Mammary epithelial cell (primary cell): ENCODE measurements at regions of chr17 and their contacts with region 1.

Region 1: GRCh38 chr17:39769974-39770587 is 32.3 kb downstream of the GRB7 start:
- DNase-seq: peak; percentile 100
- H3K4me3 ChIP-seq: no peak overlapping the region
- H3K27ac ChIP-seq: no peak overlapping the region
- H3K4me1 ChIP-seq: peaks cover 17% of the 10 kb centered on the region
- H3K27me3 ChIP-seq: peaks cover 60% of the 10 kb centered on the region
- CTCF ChIP-seq: no peak

Region 2: DNA sequence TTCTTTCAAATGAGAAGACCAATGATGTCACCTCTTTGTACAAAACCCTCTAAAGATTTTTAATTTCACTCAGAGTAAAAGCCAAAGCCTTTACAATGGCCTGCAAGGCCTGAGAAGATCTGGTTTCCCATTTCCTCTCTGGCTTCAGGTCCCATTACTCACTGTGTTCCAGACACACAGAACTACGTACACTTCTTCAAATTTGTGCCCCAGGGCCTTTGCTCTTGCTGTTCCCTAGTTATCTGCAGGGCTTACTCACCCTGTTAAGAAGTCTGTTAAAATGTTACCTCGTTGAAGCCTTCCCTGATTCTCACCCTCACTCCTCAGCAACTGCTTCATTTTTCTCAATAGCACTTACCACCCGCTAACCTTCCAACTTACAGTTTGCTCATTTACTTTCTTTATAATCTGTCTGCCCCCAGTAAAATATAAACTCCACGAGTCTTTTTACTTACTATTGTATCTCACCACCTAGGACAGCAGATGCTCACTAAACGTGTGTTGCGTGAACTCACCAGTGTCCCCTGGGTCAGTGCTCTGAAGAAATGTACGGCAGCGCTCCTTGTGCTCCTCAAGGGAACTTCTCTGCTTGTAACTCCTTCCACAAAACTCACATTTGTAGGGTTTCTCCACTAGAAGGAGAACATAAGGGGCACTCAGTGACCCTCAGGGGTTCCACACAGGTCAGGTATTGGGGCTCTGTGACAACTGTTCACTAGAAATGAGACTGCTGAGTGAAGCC is 17.8 kb after region 1 on chr17:
- CTCF ChIA-PET with region 1: no interaction called
- dilution Hi-C with region 1: no loop called
- in situ Hi-C with region 1: no loop called
- intact Hi-C with region 1: no loop called
- DNase-seq: peak; percentile 64
- H3K4me3 ChIP-seq: no peak overlapping the region
- H3K27ac ChIP-seq: no peak overlapping the region
- H3K4me1 ChIP-seq: peaks cover 11% of the 10 kb centered on the region
- H3K27me3 ChIP-seq: peaks cover 9% of the 10 kb centered on the region
- CTCF ChIP-seq: no peak

Region 3: DNA sequence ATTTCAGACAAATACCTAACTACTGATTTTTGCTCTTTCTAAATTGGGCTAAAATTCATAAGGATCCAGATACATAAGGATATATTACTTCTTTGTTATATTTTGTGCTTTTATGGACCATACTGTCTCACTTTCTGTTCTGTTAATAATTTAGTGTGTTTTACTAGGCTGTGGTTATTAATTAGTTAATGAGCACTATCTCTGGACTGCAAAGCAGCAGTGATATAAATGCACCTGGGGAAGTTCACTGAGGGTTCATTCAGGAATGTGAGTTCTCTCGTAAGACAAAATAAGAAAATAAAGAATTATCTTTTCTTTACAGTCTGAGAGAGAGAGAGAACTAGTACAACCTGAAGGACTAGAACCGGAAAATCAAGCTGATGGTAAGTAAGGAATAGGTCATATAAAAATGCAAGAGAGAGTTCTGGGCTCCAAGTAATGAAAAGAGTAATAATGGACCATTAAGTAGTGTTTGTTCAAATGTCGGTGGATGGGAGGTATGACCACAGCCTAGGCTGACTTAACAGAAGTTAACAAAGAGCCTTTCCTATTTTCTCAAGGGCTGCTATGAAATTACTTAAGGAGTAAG is 38.4 kb after region 1 on chr17:
- CTCF ChIA-PET with region 1: no interaction called
- dilution Hi-C with region 1: no loop called
- in situ Hi-C with region 1: no loop called
- intact Hi-C with region 1: no loop called
- DNase-seq: no peak
- H3K4me3 ChIP-seq: no peak overlapping the region
- H3K27ac ChIP-seq: no peak overlapping the region
- H3K4me1 ChIP-seq: no peaks in the 10 kb centered on the region
- H3K27me3 ChIP-seq: peaks cover 3% of the 10 kb centered on the region
- CTCF ChIP-seq: no peak

Region 4: GRCh38 chr17:39828443-39828842 is 58.4 kb after region 1 on chr17:
- CTCF ChIA-PET with region 1: no interaction called
- dilution Hi-C with region 1: no loop called
- in situ Hi-C with region 1: no loop called
- intact Hi-C with region 1: loop called (anchors 5 kb)
- DNase-seq: no peak
- H3K4me3 ChIP-seq: no peak overlapping the region
- H3K27ac ChIP-seq: no peak overlapping the region
- H3K4me1 ChIP-seq: no peaks in the 10 kb centered on the region
- H3K27me3 ChIP-seq: no peaks in the 10 kb centered on the region
- CTCF ChIP-seq: no peak